ENCODE measurements at regions of chr9 and their contacts with region 1.

Region 1: GRCh38 chr9:763692-764524 is 77.6 kb upstream of the DMRT1 start:
- DNase-seq: peak; percentile 93
- H3K4me3 ChIP-seq: no peak overlapping the region
- H3K27ac ChIP-seq: no peak overlapping the region
- H3K4me1 ChIP-seq: peaks cover 8% of the 10 kb centered on the region
- CTCF ChIP-seq: peak; percentile 99

Region 2: GRCh38 chr9:326667-327066 is 437.2 kb before region 1 on chr9:
- CTCF ChIA-PET with region 1: no interaction called
- POLR2A ChIA-PET with region 1: no interaction called
- intact Hi-C with region 1: no loop called
- DNase-seq: no peak
- H3K4me3 ChIP-seq: no peak overlapping the region
- H3K27ac ChIP-seq: no peak overlapping the region
- H3K4me1 ChIP-seq: no peaks in the 10 kb centered on the region
- CTCF ChIP-seq: no peak

Region 3: GRCh38 chr9:347667-348292 is 416.1 kb before region 1 on chr9:
- CTCF ChIA-PET with region 1: no interaction called
- POLR2A ChIA-PET with region 1: no interaction called
- intact Hi-C with region 1: loop called (anchors 1 kb)
- DNase-seq: peak; percentile 28
- H3K4me3 ChIP-seq: no peak overlapping the region
- H3K27ac ChIP-seq: no peak overlapping the region
- H3K4me1 ChIP-seq: no peaks in the 10 kb centered on the region
- CTCF ChIP-seq: peak; percentile 74

Region 4: DNA sequence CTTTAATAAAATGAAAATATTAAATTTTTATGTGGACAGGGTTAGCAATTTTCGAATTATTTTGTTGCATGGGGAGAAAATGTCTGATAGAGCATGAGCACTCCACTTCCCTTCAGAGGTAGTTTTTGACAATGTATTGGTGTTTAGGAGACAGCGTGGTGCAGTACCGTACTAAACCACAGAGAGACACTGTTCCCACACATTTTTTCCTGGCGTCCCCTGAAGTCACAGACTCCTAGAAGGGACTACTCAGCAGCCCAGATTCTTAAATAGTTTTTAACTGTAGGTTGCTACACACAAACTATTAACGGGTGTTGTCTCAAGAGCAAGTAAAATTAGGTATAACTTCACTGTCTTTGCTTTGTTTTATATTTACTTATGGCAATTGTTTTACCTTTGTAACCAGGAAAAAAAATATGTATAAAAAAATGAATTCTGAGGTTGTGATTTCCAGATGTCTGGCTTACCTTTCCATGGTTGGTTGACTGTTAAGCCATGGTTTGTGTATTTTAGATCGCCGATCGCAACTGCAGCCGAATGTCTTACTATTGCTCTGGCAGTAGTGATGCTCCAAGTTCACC is 378.0 kb before region 1 on chr9:
- CTCF ChIA-PET with region 1: no interaction called
- POLR2A ChIA-PET with region 1: interaction called, 4 read pairs
- intact Hi-C with region 1: loop called (anchors 1 kb)
- DNase-seq: peak; percentile 67
- H3K4me3 ChIP-seq: no peak overlapping the region
- H3K27ac ChIP-seq: no peak overlapping the region
- H3K4me1 ChIP-seq: no peaks in the 10 kb centered on the region
- CTCF ChIP-seq: peak; percentile 89

Region 5: DNA sequence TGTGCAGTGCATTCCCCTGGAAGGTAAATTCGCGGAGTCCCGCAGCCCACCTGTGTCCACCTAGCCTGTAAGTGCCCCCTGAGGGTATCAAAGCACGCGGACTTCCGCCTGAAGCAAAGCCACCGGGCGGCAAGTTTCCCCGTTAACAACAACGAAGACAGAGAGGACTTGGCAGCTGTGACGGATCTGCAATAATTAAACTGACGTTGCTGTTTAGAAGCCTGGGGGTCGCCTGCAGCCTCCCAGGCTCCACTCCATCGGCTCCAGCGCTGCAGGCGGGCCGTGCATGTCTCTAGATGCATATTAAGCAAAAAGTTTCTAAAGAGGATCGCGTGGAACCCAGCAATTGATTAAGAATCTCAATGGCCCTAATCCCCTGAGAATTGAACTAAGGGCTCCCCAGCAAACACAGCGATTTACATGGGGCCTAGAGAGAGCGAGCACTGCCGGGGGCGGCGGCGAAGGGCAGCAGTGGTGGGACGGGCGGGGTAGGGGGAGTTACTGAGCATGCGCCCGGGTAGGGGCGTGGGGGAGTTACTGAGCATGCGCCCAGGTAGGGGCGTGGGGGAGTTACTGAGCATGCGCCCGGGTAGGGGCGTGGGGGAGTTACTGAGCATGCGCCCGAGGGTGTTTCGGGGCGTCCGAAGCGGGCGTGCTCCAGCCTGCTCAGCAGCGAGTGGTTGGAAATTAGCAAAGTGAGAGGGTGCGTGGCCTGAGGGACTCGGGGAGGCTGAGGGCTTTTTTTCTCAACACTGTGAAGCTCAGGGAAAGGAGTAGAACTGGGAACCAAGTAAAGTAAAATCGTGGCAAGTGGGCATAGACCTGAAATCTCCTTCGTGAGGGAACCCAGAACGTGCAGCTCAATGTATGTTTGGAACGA is 294.0 kb before region 1 on chr9:
- CTCF ChIA-PET with region 1: no interaction called
- POLR2A ChIA-PET with region 1: no interaction called
- intact Hi-C with region 1: loop called (anchors 5 kb)
- DNase-seq: peak; percentile 91
- H3K4me3 ChIP-seq: peak overlapping the region; percentile 71
- H3K27ac ChIP-seq: peak overlapping the region; percentile 91
- H3K4me1 ChIP-seq: peaks cover 28% of the 10 kb centered on the region
- CTCF ChIP-seq: no peak